ENCODE measurements at regions of chr9 and their contacts with region 1.

Region 1: DNA sequence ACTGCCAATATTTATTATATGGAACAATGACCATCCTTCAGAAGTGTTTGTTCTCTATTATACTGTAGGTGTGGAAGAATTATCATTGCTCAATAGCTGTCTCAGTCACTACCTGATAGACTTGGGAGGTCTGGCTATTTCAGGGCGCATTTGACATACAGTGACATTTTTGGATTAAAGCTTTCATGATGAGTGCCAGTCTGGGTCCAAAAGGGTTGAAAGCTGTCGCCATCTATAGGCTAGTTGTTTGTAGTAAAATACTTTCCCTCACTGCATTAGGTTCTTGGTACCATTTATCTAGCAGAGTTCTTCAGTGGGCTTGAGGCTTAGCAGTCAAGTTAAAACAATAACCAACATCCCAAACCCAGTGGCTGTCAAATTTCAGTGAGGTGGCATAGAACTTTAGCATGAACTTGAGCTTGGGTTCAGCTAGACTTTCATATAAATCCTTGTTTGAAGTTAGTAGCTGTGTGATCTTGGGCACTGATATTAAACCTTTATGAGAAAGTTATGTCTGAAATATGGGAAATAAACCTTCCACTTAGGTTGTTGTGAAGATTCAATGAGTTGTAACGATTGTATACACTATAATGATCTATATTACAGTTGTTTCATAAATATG is 110.5 kb upstream of the CDKN2B start:
- DNase-seq: peak; percentile 53
- H3K4me3 ChIP-seq: no peak overlapping the region
- H3K27ac ChIP-seq: no peak overlapping the region
- H3K4me1 ChIP-seq: peaks cover 26% of the 10 kb centered on the region
- H3K27me3 ChIP-seq: no peaks in the 10 kb centered on the region
- CTCF ChIP-seq: peak; percentile 35 to 53
- POLR2A ChIP-seq: no peak

Region 2: GRCh38 chr9:21974548-21975409 is 144.9 kb before region 1 on chr9:
- CTCF ChIA-PET with region 1: interaction called, 12 read pairs
- POLR2A ChIA-PET with region 1: no interaction called
- dilution Hi-C with region 1: no loop called
- intact Hi-C with region 1: no loop called
- DNase-seq: peak; percentile 51
- H3K4me3 ChIP-seq: peak overlapping the region; percentile 31 to 51 (median 35)
- H3K27ac ChIP-seq: no peak overlapping the region
- H3K4me1 ChIP-seq: peaks cover 19% of the 10 kb centered on the region
- H3K27me3 ChIP-seq: peaks cover 77 to 99% of the 10 kb centered on the region in 2 experiments
- CTCF ChIP-seq: no peak
- POLR2A ChIP-seq: no peak

Region 3: GRCh38 chr9:22037954-22038690 is 81.5 kb before region 1 on chr9:
- CTCF ChIA-PET with region 1: interaction called, 36 read pairs
- POLR2A ChIA-PET with region 1: no interaction called
- dilution Hi-C with region 1: no loop called
- intact Hi-C with region 1: no loop called
- DNase-seq: peak; percentile 51
- H3K4me3 ChIP-seq: no peak overlapping the region
- H3K27ac ChIP-seq: no peak overlapping the region
- H3K4me1 ChIP-seq: no peaks in the 10 kb centered on the region
- H3K27me3 ChIP-seq: no peaks in the 10 kb centered on the region
- CTCF ChIP-seq: peak; percentile 22 to 38
- POLR2A ChIP-seq: no peak

Region 4: GRCh38 chr9:22105005-22105722 is 14.5 kb before region 1 on chr9:
- CTCF ChIA-PET with region 1: interaction called, 20 read pairs
- POLR2A ChIA-PET with region 1: no interaction called
- dilution Hi-C with region 1: no loop called
- intact Hi-C with region 1: loop called (anchors 1 kb)
- DNase-seq: no peak
- H3K4me3 ChIP-seq: no peak overlapping the region
- H3K27ac ChIP-seq: no peak overlapping the region
- H3K4me1 ChIP-seq: peaks cover 20% of the 10 kb centered on the region
- H3K27me3 ChIP-seq: no peaks in the 10 kb centered on the region
- CTCF ChIP-seq: no peak
- POLR2A ChIP-seq: no peak

Region 5: DNA sequence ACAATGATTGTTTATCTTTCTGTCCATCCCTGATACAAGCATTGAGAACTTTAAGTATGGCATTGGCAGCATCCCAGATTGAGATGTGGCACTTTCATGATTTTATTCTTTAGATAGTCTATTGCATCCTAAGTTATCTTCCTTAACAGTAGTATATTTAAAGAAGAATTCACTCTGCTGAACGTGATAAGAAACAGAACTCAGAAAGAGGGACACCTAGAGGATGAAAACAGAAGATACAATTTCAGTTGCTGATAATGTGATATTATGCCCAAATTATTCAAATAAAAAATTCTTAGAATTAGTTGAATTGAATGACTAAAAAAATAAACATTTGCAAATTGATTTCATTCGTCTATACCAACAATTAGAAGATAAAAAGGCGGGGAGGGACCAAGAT is 108.9 kb after region 1 on chr9:
- CTCF ChIA-PET with region 1: interaction called, 21 read pairs
- POLR2A ChIA-PET with region 1: no interaction called
- dilution Hi-C with region 1: no loop called
- intact Hi-C with region 1: no loop called
- DNase-seq: peak; percentile 31
- H3K4me3 ChIP-seq: no peak overlapping the region
- H3K27ac ChIP-seq: no peak overlapping the region
- H3K4me1 ChIP-seq: no peaks in the 10 kb centered on the region
- H3K27me3 ChIP-seq: no peaks in the 10 kb centered on the region
- CTCF ChIP-seq: peak; percentile 5 to 15
- POLR2A ChIP-seq: no peak

Region 6: DNA sequence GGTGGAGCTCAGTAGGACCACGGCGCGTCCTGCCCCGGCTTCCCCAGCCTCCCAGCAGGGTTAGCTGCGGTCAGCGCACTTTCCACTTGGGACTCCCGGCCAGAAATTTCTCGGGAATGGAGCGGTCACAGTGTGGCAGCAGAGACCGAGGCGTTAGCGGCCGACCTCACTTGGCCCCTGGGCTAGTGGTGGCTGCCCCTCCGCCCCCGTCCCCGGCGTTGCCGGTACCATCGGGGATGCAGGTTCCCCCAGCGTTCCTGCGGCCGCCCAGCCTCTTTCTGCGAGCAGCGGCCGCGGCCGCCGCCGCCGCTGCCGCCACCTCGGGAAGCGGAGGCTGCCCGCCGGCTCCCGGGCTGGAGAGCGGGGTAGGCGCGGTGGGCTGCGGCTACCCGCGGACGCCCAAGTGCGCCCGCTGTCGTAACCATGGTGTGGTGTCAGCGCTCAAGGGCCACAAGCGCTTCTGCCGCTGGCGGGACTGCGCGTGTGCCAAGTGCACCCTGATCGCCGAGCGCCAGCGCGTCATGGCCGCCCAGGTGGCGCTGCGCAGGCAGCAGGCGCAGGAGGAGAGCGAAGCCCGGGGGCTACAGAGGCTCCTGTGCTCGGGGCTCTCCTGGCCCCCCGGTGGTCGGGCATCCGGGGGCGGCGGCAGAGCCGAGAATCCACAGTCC is 327.4 kb after region 1 on chr9:
- CTCF ChIA-PET with region 1: interaction called, 3 read pairs
- POLR2A ChIA-PET with region 1: no interaction called
- dilution Hi-C with region 1: no loop called
- intact Hi-C with region 1: loop called (anchors 5 kb)
- DNase-seq: peak; percentile 72
- H3K4me3 ChIP-seq: peak overlapping the region; percentile 49 to 86 (median 86)
- H3K27ac ChIP-seq: peak overlapping the region; percentile 66
- H3K4me1 ChIP-seq: peaks cover 19% of the 10 kb centered on the region
- H3K27me3 ChIP-seq: peaks cover 5 to 22% of the 10 kb centered on the region in 2 experiments
- CTCF ChIP-seq: peak; percentile 27 to 42
- POLR2A ChIP-seq: no peak

Measured in endothelial cell of umbilical vein (primary cell).